ENCODE measurements at regions of chr16 and their contacts with region 1.

Region 1: DNA sequence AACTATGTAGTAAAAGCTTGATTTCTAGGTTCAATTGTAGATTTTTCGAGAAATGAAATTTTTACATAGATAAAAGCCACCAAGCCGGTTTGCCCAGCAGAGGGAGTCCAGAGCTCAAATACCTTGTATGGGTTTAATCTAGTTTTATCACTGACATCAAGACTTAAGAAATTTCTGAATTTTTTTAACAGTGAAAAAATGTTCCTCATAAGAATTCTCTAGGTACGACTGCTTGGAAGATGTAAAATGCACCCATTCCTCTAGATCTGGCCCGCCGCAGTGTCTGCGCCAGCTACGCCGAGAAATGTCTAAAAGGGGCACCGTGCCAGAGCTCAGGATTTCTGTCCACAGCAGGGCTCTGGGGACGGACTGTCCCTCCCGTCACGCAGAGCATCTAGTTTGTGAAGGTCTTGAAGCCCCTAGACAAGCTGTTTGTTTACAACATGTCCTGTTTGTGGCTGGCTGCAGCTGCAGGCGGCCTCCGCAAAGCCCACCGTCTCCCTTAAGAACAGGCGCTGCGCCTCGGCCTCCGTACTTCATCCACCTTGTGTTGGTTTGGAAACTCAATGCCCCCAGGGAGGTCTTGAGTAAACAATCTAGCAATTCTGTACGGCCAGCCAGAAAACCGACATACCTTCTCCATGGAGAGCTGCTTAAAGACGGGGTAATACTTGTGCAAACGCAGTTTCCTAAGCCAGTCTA is 24.8 kb downstream of the MAP1LC3B start:
- DNase-seq: peak; percentile 73
- H3K4me3 ChIP-seq: no peak overlapping the region
- H3K27ac ChIP-seq: no peak overlapping the region; a peak in 1 of 4 replicates
- H3K4me1 ChIP-seq: peaks cover 0 to 3% of the 10 kb centered on the region in 2 experiments; a peak in 1 of 4 replicates
- H3K27me3 ChIP-seq: no peaks in the 10 kb centered on the region
- CTCF ChIP-seq: peak; percentile 94
- EP300 ChIP-seq: no peak
- RAD21 ChIP-seq: peak; percentile 85

Region 2: GRCh38 chr16:87217303-87217702 is 199.7 kb before region 1 on chr16:
- CTCF ChIA-PET with region 1: no interaction called
- POLR2A ChIA-PET with region 1: no interaction called
- DNase-seq: no peak
- H3K4me3 ChIP-seq: no peak overlapping the region
- H3K27ac ChIP-seq: no peak overlapping the region
- H3K4me1 ChIP-seq: no peaks in the 10 kb centered on the region
- H3K27me3 ChIP-seq: no peaks in the 10 kb centered on the region; the same call in 1 of the 2 replicates
- CTCF ChIP-seq: no peak
- EP300 ChIP-seq: no peak
- RAD21 ChIP-seq: no peak

Region 3: DNA sequence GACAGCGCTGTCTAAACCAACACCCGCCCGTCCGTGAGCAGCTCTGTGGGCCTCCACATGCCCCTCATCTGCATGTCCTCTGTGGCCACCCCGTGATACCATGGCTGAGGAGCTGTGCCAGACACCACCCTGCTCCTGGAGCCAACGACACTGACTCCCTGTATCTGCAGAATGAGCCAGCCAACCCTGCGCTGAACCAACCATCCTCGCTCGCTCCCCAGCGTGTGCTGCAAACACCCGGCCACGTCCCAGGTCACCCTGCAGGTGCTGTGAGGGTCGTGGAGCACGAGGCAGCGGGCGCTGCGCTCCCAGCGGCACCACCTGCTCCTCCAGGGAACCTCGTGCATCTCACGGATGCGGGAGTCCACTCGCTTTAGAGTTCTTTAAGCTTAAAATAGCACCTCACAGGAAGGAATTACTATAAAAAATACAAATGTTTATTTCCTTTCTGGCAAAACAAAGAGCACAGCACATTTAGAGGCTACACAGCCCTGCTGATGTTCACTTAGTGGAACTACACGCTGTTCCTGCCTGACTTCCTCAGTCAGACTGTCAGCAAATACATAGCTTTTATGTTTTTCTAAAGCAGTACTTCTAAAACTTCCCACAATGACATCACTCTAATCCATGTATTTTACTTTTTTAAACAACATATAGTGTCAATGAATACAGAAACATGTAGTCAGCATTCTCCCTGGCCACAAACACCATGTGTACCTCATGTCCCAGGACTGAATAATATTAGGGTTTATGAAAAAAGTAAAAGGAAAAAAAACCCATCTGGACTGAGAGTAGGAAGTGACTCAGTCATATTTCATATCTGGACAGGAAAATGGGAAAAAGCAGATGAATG is 18.6 kb after region 1 on chr16:
- CTCF ChIA-PET with region 1: interaction called, 11 read pairs
- POLR2A ChIA-PET with region 1: no interaction called
- DNase-seq: peak; percentile 41
- H3K4me3 ChIP-seq: peak overlapping the region; percentile 25 to 63; a peak in 3 of 4 replicates
- H3K27ac ChIP-seq: peak overlapping the region; percentile 71 to 93
- H3K4me1 ChIP-seq: peaks cover 18 to 37% of the 10 kb centered on the region in 2 experiments
- H3K27me3 ChIP-seq: no peaks in the 10 kb centered on the region
- CTCF ChIP-seq: no peak
- EP300 ChIP-seq: no peak; a peak in 1 of 4 replicates
- RAD21 ChIP-seq: no peak

Region 4: DNA sequence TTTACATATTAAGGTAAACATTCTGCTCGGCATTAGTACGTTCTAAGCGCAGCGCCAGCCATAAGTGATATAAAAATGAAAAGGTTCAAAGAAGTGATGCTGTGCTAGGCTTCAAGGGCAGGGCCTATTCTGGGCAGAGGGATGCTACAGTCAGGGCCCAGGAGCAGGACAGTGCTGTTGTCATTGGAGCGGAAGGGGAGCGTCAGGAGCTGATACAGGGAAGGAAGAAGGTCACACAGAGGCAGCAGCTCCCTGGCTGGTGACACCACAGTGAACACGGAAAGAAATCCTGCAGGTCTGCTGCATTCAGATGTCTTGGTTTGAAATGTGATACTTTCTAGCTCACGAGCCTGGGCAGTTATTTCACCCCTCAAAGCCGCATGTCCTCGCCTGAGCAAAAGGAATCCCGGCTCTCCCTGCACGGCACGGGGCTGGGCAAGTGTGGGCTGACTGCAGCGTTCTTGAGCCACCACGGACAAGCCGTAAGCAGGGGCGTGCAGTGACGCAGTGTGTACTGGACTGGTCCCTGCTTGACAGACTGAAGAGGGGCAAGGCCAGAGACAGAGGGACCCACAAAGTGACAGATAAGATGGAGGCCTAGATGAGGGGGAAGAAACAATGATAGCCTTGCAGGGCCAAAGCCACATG is 34.7 kb after region 1 on chr16:
- CTCF ChIA-PET with region 1: interaction called, 11 read pairs
- POLR2A ChIA-PET with region 1: no interaction called
- DNase-seq: no peak
- H3K4me3 ChIP-seq: no peak overlapping the region
- H3K27ac ChIP-seq: no peak overlapping the region
- H3K4me1 ChIP-seq: peaks cover 1 to 2% of the 10 kb centered on the region in 2 experiments; a peak in 3 of 4 replicates
- H3K27me3 ChIP-seq: no peaks in the 10 kb centered on the region
- CTCF ChIP-seq: no peak
- EP300 ChIP-seq: no peak
- RAD21 ChIP-seq: no peak

Region 5: GRCh38 chr16:87491522-87492293 is 74.7 kb after region 1 on chr16:
- CTCF ChIA-PET with region 1: interaction called, 10 read pairs
- POLR2A ChIA-PET with region 1: no interaction called
- DNase-seq: peak; percentile 47
- H3K4me3 ChIP-seq: peak overlapping the region; percentile 59 to 64
- H3K27ac ChIP-seq: no peak overlapping the region; a peak in 1 of 4 replicates
- H3K4me1 ChIP-seq: peaks cover 14 to 40% of the 10 kb centered on the region in 2 experiments
- H3K27me3 ChIP-seq: no peaks in the 10 kb centered on the region
- CTCF ChIP-seq: no peak
- EP300 ChIP-seq: no peak
- RAD21 ChIP-seq: peak; percentile 35

Region 6: GRCh38 chr16:87571136-87571867 is 154.3 kb after region 1 on chr16:
- CTCF ChIA-PET with region 1: interaction called, 17 read pairs
- POLR2A ChIA-PET with region 1: no interaction called
- DNase-seq: peak; percentile 71
- H3K4me3 ChIP-seq: no peak overlapping the region
- H3K27ac ChIP-seq: no peak overlapping the region; a peak in 1 of 4 replicates
- H3K4me1 ChIP-seq: peaks cover 0 to 21% of the 10 kb centered on the region in 2 experiments; a peak in 1 of 4 replicates
- H3K27me3 ChIP-seq: no peaks in the 10 kb centered on the region; the same call in 1 of the 2 replicates
- CTCF ChIP-seq: peak; percentile 37
- EP300 ChIP-seq: no peak
- RAD21 ChIP-seq: peak; percentile 40